ENCODE measurements at regions of chr5 and their contacts with region 1.

Region 1: DNA sequence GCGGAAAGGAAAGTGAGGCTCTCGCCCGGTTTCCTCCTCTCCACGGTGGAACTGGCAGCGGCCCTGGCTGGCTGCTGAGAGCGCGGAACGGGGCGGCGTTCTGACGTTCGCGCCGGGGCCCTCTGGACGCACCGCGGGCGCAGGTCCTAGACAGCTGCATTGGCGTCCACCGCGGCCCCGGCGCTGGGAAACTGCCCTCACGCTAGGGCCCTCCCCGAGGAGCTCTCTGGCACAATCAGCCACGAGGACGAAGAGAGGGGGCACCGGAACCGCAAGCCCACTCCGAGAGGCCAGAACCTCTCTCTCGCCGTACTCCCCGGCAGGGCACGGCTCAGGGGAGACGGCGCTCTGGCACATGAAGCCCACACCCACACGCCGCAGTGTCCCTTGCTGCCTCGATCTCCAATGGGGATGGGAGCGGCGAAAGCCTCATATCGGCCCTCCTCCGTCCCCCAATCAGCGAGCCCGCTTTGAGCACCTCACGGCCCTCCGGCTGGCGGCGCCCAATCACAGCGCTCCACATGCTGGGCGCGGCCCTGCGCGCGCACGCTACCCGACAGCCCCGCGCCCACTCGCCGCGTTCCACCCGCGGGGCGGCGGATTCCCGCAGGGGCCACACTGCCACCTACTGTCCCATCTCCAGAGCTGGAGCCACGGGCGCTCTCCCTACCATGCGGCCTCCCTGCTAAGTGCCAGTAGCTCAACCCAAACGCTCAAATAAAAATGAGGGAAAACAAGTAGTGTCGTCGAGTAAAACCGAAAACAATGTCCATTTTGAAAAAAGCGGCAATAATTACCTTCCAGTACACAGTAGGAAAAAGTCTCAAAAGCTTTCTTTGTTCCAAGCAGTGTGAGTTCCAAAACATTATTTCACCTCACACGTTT is 11.8 kb downstream of the MRPS27 start:
- DNase-seq: peak; percentile 95
- H3K4me3 Mint-ChIP-seq: peak overlapping the region; percentile 90
- H3K27ac Mint-ChIP-seq: peak overlapping the region; percentile 99
- H3K4me1 Mint-ChIP-seq: peaks cover 37% of the 10 kb centered on the region
- H3K27me3 Mint-ChIP-seq: peaks cover 2% of the 10 kb centered on the region

Region 2: GRCh38 chr5:71455427-71456361 is 852.5 kb before region 1 on chr5 and contains the start of gene BDP1:
- intact Hi-C with region 1: loop called (anchors 1 kb)
- DNase-seq: peak; percentile 94
- H3K4me3 Mint-ChIP-seq: peak within 1 kb of the TSS; percentile 98
- H3K27ac Mint-ChIP-seq: peak within 1 kb of the TSS; percentile 100
- H3K4me1 Mint-ChIP-seq: peaks cover 30% of the 10 kb centered on the region
- H3K27me3 Mint-ChIP-seq: peaks cover under 1% of the 10 kb centered on the region
- total RNA-seq, gene BDP1: 41.2 and 41.5 TPM in 2 replicates

Region 3: DNA sequence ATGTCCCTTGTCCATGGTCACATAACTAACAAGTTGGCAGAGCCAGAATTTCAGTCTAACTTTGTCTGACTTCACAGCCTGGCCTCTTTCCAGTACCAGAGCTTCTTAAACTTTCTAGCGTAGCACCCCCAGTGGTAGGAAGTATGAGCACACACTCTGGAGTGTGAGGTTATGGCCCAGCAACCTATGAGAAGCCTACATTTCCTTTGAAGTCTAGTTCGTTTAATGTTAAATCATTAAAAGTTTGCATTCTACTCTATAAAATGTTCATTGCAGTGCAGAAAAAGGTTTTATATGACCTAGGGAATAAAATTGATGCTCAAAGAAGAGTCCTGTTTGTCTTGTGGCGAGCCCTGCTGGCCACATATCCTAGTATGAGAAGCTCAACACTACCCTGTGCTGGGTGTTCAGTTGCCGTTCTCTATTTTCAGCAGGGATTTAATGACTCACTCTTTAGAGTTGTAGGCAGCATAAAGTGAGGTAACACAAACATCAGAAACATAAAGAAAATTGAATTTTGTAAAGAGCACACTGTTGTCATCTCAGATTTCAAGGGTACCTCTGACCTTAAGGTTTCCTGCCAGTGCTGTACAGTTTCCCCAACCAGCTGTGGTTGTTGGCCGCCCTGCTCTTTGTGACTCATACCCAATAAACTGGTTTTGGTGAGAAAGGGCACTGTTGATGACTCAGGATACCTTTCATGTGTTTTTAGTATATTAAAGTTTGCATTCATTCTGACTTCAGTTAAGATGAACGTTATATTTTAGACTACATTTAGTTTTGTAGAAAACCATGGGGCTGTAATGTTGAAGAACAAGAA is 706.8 kb before region 1 on chr5:
- intact Hi-C with region 1: loop called (anchors 2 kb)
- DNase-seq: peak; percentile 68
- H3K4me3 Mint-ChIP-seq: peak overlapping the region; percentile 13
- H3K27ac Mint-ChIP-seq: peak overlapping the region; percentile 92
- H3K4me1 Mint-ChIP-seq: peaks cover 38% of the 10 kb centered on the region
- H3K27me3 Mint-ChIP-seq: no peaks in the 10 kb centered on the region

Region 4: GRCh38 chr5:72138943-72139521 is 169.2 kb before region 1 on chr5:
- intact Hi-C with region 1: loop called (anchors 1 kb)
- DNase-seq: no peak
- H3K4me3 Mint-ChIP-seq: no peak overlapping the region
- H3K27ac Mint-ChIP-seq: no peak overlapping the region
- H3K4me1 Mint-ChIP-seq: peaks cover 12% of the 10 kb centered on the region
- H3K27me3 Mint-ChIP-seq: peaks cover 35% of the 10 kb centered on the region

Region 5: DNA sequence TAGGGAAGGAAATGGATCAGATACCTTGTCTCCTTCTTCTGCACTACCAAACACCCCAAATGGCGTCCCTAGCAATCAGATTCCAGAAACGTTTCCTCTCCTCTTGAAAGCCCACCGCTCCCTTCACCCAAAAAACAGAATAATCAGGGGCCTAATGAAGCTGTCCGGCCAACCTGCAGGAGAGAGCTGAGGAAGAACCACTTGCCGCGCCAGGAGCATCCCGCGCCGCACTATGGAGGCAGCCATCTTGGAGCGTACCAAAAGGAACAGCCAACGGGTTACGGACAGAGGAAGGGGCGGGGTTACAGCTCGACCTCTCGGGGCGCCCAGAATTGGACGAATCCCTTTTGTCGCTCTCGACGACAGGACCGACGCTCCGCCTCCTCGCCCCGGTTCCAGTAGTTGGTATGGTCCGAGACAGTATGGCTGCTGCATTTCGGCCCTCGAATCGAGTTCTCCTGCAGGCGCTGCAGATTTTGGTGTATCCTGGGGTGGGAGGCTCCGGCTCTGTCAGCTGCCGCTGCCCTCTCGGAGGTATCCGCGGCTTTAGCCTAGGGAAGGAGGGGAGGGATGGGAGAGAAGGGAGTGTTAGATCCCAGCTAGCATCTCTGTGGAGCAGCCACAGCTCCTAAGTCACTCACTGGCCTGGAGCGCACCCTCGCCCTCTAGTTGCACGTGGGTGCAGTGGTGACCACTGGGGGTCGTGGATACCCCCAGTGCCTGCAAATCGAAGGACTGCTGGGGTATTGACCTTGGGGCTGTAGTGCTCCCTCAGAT is 12.0 kb after region 1 on chr5 and contains the starts of genes MRPS27 and PTCD2:
- intact Hi-C with region 1: loop called (anchors 1 kb)
- DNase-seq: peak; percentile 93
- H3K4me3 Mint-ChIP-seq: peak within 1 kb of the TSS; percentile 95
- H3K27ac Mint-ChIP-seq: peak within 1 kb of the TSS; percentile 83
- H3K4me1 Mint-ChIP-seq: peaks cover 41% of the 10 kb centered on the region
- H3K27me3 Mint-ChIP-seq: no peaks in the 10 kb centered on the region
- total RNA-seq, gene MRPS27: 80.1 and 88.2 TPM in 2 replicates
- total RNA-seq, gene PTCD2: 13.2 and 16.9 TPM in 2 replicates